OCI-LY7 (cell line): ENCODE measurements at regions of chr9 and their contacts with region 1.

Region 1: GRCh38 chr9:20382460-20383071 is 239.7 kb downstream of the MLLT3 start:
- DNase-seq: no peak
- H3K4me3 ChIP-seq: no peak overlapping the region
- H3K27ac ChIP-seq: no peak overlapping the region
- H3K4me1 ChIP-seq: peaks cover 10% of the 10 kb centered on the region
- CTCF ChIP-seq: no peak

Region 2: DNA sequence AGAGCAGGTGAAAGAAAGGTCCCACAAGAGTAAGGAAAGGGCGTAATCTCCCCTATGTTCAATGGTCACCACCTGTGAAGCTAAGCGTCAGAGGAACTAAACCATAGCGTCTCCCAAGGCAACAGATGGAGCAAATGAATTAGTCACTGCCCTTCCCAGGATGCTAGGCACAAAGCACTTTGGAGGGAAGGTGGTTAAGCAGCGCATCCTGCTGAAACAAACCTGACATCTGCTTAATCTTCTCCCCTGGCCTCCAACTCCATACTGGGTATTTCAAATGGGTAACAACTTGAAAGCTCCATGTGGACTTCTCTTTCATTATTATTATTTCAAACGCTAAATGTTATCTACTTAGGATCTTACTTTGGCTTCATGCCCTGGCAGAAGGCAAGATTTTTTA is 12.4 kb after region 1 on chr9:
- CTCF ChIA-PET with region 1: no interaction called
- POLR2A ChIA-PET with region 1: interaction called, 12 read pairs
- intact Hi-C with region 1: no loop called
- DNase-seq: no peak
- H3K4me3 ChIP-seq: no peak overlapping the region
- H3K27ac ChIP-seq: no peak overlapping the region
- H3K4me1 ChIP-seq: peaks cover 7% of the 10 kb centered on the region
- CTCF ChIP-seq: no peak